Activated CD8-positive, alpha-beta T cell treated with anti-CD3 and anti-CD28 coated beads, Interleukin-2, amount 10 ng/mL, durations not matched to agents 7 days and 5 days (primary cell): ENCODE measurements at regions of chr1 and their contacts with region 1.

Region 1: GRCh38 chr1:6489799-6490180 is 1.7 kb downstream of the PLEKHG5 start:
- DNase-seq: peak; percentile 83
- ATAC-seq: peak; percentile 79
- H3K4me3 Mint-ChIP-seq: peak overlapping the region; percentile 76
- H3K27ac Mint-ChIP-seq: peak overlapping the region; percentile 71
- H3K4me1 Mint-ChIP-seq: peaks cover 33% of the 10 kb centered on the region
- H3K27me3 Mint-ChIP-seq: peaks cover 18% of the 10 kb centered on the region

Region 2: GRCh38 chr1:6475381-6476133 is 14.2 kb before region 1 on chr1:
- CTCF ChIA-PET with region 1: interaction called, 17 read pairs
- POLR2A ChIA-PET with region 1: no interaction called
- DNase-seq: peak; percentile 81
- ATAC-seq: peak; percentile 97
- H3K4me3 Mint-ChIP-seq: no peak overlapping the region
- H3K27ac Mint-ChIP-seq: peak overlapping the region; percentile 20
- H3K4me1 Mint-ChIP-seq: peaks cover 2% of the 10 kb centered on the region
- H3K27me3 Mint-ChIP-seq: no peaks in the 10 kb centered on the region

Region 3: DNA sequence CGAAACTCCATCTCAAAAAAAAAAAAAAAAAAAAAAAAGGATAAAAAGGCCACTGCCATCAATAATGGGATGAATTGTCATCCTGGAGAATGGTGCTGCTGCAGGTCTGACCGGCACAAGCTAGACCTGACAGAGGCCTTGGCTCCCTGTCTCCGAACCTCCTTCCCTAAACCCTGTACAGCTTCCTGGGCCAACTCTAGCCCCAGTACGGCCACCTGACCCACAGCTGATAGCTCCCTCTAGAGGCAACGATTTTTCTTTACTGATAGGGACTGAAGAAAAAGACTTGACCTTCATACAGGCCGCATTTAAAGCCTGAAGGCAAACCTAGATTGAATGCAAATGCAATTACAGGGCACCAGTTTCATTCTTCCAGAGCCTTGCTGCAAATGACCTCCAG is 33.8 kb after region 1 on chr1:
- CTCF ChIA-PET with region 1: interaction called, 13 read pairs
- POLR2A ChIA-PET with region 1: no interaction called
- DNase-seq: no peak
- ATAC-seq: no peak
- H3K4me3 Mint-ChIP-seq: no peak overlapping the region
- H3K27ac Mint-ChIP-seq: no peak overlapping the region
- H3K4me1 Mint-ChIP-seq: peaks cover 5% of the 10 kb centered on the region
- H3K27me3 Mint-ChIP-seq: no peaks in the 10 kb centered on the region

Region 4: DNA sequence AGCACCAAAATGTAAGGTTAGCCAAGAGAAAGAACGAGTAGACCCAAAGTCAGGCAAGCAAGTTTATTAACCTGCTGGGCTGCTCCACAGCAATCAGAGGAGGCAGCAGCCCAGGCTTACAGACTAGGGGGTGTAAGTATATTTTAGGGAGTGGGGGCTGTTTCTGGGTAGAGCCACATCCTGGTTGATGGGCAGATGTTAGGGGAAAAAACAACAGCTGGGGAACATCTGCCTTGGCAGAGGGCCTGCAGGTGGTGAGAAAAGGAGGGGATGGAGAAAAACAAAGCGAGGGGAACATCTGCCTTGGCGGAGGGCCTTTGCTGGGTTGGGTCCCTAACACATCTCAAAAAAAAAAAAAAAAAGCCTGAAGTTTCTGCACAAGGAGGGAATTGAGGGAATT is 80.3 kb after region 1 on chr1:
- CTCF ChIA-PET with region 1: no interaction called
- POLR2A ChIA-PET with region 1: no interaction called
- DNase-seq: no peak
- ATAC-seq: no peak
- H3K4me3 Mint-ChIP-seq: no peak overlapping the region
- H3K27ac Mint-ChIP-seq: no peak overlapping the region
- H3K4me1 Mint-ChIP-seq: peaks cover 7% of the 10 kb centered on the region
- H3K27me3 Mint-ChIP-seq: peaks cover 5% of the 10 kb centered on the region

Region 5: GRCh38 chr1:6646499-6647148 is 156.8 kb after region 1 on chr1:
- CTCF ChIA-PET with region 1: interaction called, 60 read pairs
- POLR2A ChIA-PET with region 1: no interaction called
- DNase-seq: peak; percentile 44
- ATAC-seq: peak; percentile 44
- H3K4me3 Mint-ChIP-seq: no peak overlapping the region
- H3K27ac Mint-ChIP-seq: no peak overlapping the region
- H3K4me1 Mint-ChIP-seq: no peaks in the 10 kb centered on the region
- H3K27me3 Mint-ChIP-seq: no peaks in the 10 kb centered on the region